ENCODE measurements at regions of chr6 and their contacts with region 1.

Region 1: DNA sequence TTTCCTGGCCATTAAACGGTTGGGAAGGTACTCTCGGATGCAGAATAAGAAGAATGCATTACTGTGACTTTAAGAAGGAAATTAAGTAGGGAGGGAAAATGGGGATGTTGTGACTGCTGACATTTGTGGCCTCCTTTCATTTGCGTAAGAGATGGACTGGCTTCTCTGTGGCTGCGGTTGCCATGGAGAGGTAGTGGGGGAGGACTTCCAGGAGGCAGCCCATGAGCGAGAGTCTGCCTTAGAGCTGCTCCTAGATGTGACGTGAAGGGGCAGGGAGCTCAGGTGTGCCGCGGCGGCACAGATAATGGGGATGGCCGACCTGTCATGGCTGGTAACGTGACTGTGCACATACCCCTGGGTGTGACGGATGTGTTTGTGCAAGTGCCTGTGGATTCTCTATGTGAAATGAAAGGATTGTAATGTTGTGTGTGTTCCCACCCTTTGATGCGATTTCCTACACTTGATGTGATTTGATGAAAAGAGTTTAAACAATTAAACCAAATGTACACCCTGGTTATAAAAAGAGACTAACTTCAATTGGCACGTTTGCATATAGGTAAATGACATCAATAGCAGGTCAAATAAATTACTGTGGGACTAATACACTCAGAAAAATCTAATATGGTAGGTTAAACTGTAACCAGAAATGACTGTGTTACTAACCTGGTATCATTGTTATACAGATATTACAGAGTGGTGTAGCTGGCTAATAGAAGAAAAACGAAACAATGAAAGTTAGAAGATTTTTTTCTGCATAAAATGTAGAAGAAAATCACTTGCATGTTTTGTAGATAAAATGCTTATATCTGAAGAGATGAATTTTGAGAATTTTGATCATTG is 48.9 kb downstream of the HIVEP1 start:
- DNase-seq: peak; percentile 87
- ATAC-seq: peak; percentile 82
- H3K4me3 ChIP-seq: peak overlapping the region; percentile 57; the same call in 1 of the 2 replicates
- H3K27ac ChIP-seq: peak overlapping the region; percentile 85
- H3K4me1 ChIP-seq: peaks cover 44% of the 10 kb centered on the region
- H3K27me3 ChIP-seq: no peaks in the 10 kb centered on the region
- CTCF ChIP-seq: no peak
- EP300 ChIP-seq: peak; percentile 94
- POLR2A ChIP-seq: peak; percentile 70
- RAD21 ChIP-seq: no peak

Region 2: DNA sequence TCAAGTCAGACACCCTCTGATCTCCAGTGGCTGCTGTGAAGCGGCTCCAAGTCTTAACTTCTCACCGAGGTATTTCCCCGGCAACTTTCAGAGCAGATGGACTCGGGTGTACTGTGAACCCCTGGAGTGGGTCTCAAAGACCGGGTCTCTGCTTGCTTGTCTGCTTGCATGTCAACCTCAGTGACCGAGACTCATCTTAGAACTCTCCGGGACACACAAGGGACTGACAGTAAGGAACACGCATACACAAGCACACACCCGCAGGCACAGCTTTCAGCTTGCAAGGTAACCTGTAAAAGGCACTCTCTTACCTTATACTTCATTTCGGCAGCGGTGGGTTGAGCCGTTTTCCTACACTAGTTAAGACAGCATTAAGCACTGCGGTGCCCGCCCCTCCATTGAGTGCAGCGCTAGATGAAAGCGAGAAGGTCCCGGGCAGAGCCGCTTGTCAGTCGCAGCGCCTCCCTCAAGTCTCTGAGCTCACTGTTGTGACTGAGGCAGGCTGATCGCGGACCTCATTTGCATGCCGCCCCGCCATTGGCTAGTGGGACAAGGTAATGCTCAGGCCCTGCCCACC is 828.7 kb before region 1 on chr6 and contains the start of gene NEDD9:
- CTCF ChIA-PET with region 1: no interaction called
- POLR2A ChIA-PET with region 1: no interaction called
- RAD21 ChIA-PET with region 1: no interaction called
- SMC1A ChIA-PET with region 1: no interaction called
- in situ Hi-C with region 1: no loop called
- intact Hi-C with region 1: no loop called
- DNase-seq: peak; percentile 86
- ATAC-seq: peak; percentile 98
- H3K4me3 ChIP-seq: peak within 1 kb of the TSS; percentile 84
- H3K27ac ChIP-seq: peak within 1 kb of the TSS; percentile 66
- H3K4me1 ChIP-seq: peaks cover 10% of the 10 kb centered on the region; the same call in 1 of the 2 replicates
- H3K27me3 ChIP-seq: no peaks in the 10 kb centered on the region
- CTCF ChIP-seq: no peak
- EP300 ChIP-seq: no peak
- POLR2A ChIP-seq: peak; percentile 96
- RAD21 ChIP-seq: no peak
- polyA plus RNA-seq, gene NEDD9: 4.9 to 6.3 TPM

Region 3: GRCh38 chr6:11722805-11723631 is 338.0 kb before region 1 on chr6:
- CTCF ChIA-PET with region 1: interaction called, 5 read pairs
- POLR2A ChIA-PET with region 1: interaction called, 6 read pairs
- RAD21 ChIA-PET with region 1: interaction called, 11 read pairs
- SMC1A ChIA-PET with region 1: interaction called, 8 read pairs
- in situ Hi-C with region 1: no loop called
- intact Hi-C with region 1: no loop called
- DNase-seq: no peak
- ATAC-seq: peak; percentile 78
- H3K4me3 ChIP-seq: peak overlapping the region; percentile 63
- H3K27ac ChIP-seq: peak overlapping the region; percentile 88
- H3K4me1 ChIP-seq: peaks cover 8% of the 10 kb centered on the region
- H3K27me3 ChIP-seq: no peaks in the 10 kb centered on the region
- CTCF ChIP-seq: no peak
- EP300 ChIP-seq: no peak
- POLR2A ChIP-seq: no peak; the same call in 1 of the 2 replicates
- RAD21 ChIP-seq: 0 out of 2 replicates have a peak, but pooled peaks have one; percentile 4

Region 4: GRCh38 chr6:11824986-11825385 is 236.0 kb before region 1 on chr6:
- CTCF ChIA-PET with region 1: interaction called, 5 read pairs
- POLR2A ChIA-PET with region 1: interaction called, 6 read pairs
- RAD21 ChIA-PET with region 1: interaction called, 11 read pairs
- SMC1A ChIA-PET with region 1: interaction called, 10 read pairs
- in situ Hi-C with region 1: no loop called
- intact Hi-C with region 1: no loop called
- DNase-seq: peak; percentile 91
- ATAC-seq: peak; percentile 86
- H3K4me3 ChIP-seq: no peak overlapping the region
- H3K27ac ChIP-seq: peak overlapping the region; percentile 70
- H3K4me1 ChIP-seq: peaks cover 47% of the 10 kb centered on the region
- H3K27me3 ChIP-seq: no peaks in the 10 kb centered on the region
- CTCF ChIP-seq: no peak
- EP300 ChIP-seq: peak; percentile 90; a peak in 3 of 4 replicates
- POLR2A ChIP-seq: no peak
- RAD21 ChIP-seq: peak; percentile 14

Region 5: GRCh38 chr6:12081771-12082170 is 20.8 kb after region 1 on chr6:
- CTCF ChIA-PET with region 1: interaction called, 6 read pairs
- POLR2A ChIA-PET with region 1: interaction called, 18 read pairs
- RAD21 ChIA-PET with region 1: interaction called, 9 read pairs
- SMC1A ChIA-PET with region 1: interaction called, 13 read pairs
- in situ Hi-C with region 1: no loop called
- intact Hi-C with region 1: no loop called
- DNase-seq: no peak
- ATAC-seq: peak; percentile 68
- H3K4me3 ChIP-seq: peak overlapping the region; percentile 32; the same call in 1 of the 2 replicates
- H3K27ac ChIP-seq: peak overlapping the region; percentile 50
- H3K4me1 ChIP-seq: peaks cover 28% of the 10 kb centered on the region
- H3K27me3 ChIP-seq: no peaks in the 10 kb centered on the region
- CTCF ChIP-seq: no peak
- EP300 ChIP-seq: no peak
- POLR2A ChIP-seq: no peak
- RAD21 ChIP-seq: no peak

Region 6: GRCh38 chr6:12103158-12103557 is 42.2 kb after region 1 on chr6:
- CTCF ChIA-PET with region 1: no interaction called
- POLR2A ChIA-PET with region 1: interaction called, 6 read pairs
- RAD21 ChIA-PET with region 1: interaction called, 7 read pairs
- SMC1A ChIA-PET with region 1: interaction called, 18 read pairs
- in situ Hi-C with region 1: no loop called
- intact Hi-C with region 1: no loop called
- DNase-seq: no peak
- ATAC-seq: peak; percentile 27; the same call in 2 of the 3 replicates
- H3K4me3 ChIP-seq: no peak overlapping the region
- H3K27ac ChIP-seq: 0 out of 2 replicates have a peak overlapping the region, but pooled peaks have one; percentile 35
- H3K4me1 ChIP-seq: peaks cover 7% of the 10 kb centered on the region
- H3K27me3 ChIP-seq: no peaks in the 10 kb centered on the region
- CTCF ChIP-seq: no peak
- EP300 ChIP-seq: no peak
- POLR2A ChIP-seq: no peak
- RAD21 ChIP-seq: no peak

Region 7: DNA sequence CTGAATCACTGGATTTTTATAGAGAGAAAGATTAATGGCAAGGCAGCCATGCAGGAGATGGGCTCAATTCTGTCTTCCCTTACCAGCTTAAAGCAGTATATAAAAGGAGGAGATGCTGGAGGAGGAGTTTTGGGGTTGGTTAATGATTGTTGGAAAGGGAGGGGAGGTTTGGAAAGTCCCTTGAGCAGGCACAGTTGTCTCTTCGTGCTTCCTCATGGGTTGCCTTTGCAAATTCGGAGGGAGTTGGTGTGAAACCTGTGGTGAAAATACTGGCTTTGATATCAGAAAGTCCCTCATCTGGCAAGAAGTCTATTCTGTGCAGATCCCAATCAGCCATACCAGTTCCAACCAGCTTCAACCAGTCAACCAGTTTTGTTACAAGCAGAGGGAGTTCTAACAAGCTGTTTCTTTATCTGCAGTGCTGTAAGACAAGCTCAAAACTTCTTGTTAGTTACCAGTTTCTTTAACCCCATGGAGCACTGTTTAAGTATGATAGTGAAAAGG is 58.1 kb after region 1 on chr6:
- CTCF ChIA-PET with region 1: interaction called, 7 read pairs
- POLR2A ChIA-PET with region 1: interaction called, 6 read pairs
- RAD21 ChIA-PET with region 1: interaction called, 32 read pairs
- SMC1A ChIA-PET with region 1: interaction called, 56 read pairs
- in situ Hi-C with region 1: no loop called
- intact Hi-C with region 1: loop called (anchors 5 kb)
- DNase-seq: peak; percentile 97
- ATAC-seq: peak; percentile 83
- H3K4me3 ChIP-seq: peak overlapping the region; percentile 34; the same call in 1 of the 2 replicates
- H3K27ac ChIP-seq: peak overlapping the region; percentile 92
- H3K4me1 ChIP-seq: peaks cover 34% of the 10 kb centered on the region
- H3K27me3 ChIP-seq: no peaks in the 10 kb centered on the region
- CTCF ChIP-seq: no peak
- EP300 ChIP-seq: peak; percentile 82 to 90; a peak in 3 of 4 replicates
- POLR2A ChIP-seq: no peak
- RAD21 ChIP-seq: no peak